ENCODE measurements at regions of chr1 and their contacts with region 1.

Region 1: DNA sequence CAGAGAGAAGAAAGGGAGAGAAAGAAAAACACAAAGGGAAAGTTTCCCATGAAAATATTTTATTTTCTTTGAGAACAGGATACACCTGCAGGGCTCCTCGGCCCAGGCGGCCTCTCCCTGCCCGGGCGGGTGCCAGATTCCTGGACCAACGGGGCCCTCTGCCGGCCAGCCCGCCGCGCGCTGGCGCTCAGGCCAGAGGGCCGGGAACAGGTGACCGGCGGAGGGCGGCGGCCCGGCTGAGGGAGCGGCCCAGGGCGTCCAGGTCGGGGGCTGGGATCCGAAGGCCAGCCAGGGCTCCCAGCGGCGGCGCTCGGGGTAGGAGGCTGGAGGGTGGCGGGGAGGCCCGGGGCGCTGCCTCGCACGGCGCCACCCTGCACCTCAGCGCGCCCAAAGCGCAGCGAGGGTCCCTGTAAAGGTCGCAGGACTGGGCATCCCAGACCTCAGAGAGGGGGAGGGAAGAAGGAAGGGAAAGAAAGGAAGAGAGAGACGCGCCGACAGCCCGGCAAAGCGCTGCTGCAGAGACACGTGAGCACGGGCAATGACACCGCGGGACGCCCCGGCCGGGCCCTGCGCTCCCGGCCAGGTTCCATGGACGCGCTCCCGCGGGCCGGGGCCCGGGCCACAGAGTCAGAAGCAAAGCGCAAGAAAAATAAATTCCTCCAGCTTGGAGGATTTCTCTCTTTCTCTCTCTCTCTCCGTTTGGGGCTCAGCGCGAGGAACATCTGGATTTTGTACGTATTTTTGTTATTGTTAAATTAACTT is 927 bp downstream of the WNT9A start:
- DNase-seq: peak; percentile 90

Region 2: DNA sequence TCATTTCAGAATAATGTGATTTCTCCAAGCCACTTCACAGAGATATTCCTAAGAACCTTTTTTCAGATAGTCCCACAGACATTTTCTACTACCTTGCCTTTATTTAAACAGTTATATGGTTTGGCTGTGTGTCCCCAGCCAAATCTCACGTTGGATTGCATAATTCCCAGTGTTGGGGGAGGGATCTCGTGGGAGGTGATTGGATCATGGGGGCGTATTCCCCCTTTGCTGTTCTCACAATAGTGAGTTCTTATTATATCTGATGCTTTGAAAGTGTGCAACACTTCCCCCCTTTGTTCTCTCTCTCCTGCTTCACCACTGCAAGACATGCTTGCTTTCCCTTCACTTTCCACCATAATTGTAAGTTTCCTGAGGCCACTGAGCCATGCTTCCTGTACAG is 477.1 kb before region 1 on chr1:
- intact Hi-C with region 1: loop called in 1 of 2 experiments (anchors 10 kb)
- DNase-seq: no peak

Region 3: GRCh38 chr1:227489572-227489971 is 457.2 kb before region 1 on chr1:
- intact Hi-C with region 1: loop called in 1 of 2 experiments (anchors 10 kb)
- DNase-seq: no peak

Region 4: DNA sequence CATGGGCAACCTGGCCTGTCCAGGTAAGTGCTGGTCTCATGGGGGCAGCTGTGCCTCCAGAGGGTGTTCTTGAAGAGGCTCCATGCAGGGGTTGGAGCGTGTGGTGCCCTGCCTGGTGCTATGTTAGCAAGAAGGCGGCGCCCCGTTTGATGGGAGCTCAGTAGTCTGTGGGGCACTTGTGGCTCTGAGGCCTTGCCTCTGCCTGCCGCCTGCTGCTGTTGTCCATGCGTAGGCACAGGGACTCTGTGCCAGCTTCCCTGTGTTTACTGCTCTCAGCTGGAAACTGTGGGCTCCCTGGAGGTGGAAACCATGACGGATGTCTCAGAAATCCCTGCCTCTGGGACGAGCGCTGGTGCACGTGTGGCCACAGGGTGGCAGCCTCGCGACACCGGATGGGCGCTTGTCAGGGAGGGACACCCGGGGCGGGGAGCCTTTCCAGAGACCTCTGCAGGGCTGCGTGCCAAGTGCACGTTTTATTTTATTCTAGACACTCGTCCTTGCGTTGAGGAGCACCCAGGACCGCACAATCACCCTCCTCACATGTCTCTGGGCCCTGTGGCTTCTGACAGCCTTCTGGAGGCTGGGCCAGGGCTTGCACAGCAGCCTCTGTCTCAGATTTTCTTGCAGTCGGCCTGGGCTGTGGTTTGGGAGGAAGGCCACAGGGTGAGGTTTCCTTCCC is 184.4 kb before region 1 on chr1:
- intact Hi-C with region 1: loop called (anchors 2 to 5 kb)
- DNase-seq: peak; percentile 94

Region 5: DNA sequence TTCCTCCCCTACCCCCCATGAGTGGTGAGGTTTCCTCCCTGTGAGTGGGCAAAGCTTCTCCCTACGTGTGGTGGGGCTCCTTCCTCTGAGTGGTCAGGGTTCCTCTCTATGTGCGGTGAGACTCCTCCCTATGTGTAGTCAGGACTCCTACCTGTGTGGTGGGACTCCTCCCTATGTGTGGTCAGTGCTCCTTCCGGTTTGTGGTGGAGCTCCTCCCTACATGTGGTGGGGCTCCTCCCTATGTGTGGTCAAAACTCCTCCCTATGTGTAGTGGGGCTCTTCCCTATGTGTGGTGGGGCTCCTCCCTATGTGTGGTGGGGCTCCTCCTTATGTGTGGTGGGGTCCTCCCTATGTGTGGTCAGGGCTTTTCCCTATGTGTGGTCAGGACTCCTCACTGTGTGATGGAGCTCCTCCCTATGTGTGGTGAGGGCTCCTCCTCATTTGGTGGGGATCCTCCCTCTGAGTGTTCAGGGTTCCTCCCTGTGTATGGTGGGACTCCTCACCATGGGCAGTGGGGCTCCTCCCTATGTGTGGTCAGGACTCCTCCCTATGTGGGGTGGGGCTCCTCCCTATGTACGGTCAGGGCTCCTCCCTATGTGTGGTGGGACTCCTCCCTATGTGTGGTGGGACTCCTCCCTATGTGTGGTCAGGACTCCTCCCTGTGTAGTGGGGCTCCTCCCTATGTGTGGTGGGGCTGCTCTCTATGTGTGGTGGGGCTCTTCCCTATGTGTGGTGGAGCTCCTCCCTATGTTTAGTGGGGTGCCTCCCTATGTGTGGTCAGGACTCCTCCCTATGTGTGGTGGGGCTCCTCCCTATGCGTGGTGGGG is 102.3 kb before region 1 on chr1:
- intact Hi-C with region 1: no loop called
- DNase-seq: no peak

Measured in posterior vena cava (tissue), 2 donors.